ENCODE measurements at regions of chr16 and their contacts with region 1.

Region 1: GRCh38 chr16:17578921-17579874 is 108.4 kb upstream of the XYLT1 start:
- H3K4me3 Mint-ChIP-seq: no peak overlapping the region
- H3K27ac Mint-ChIP-seq: no peak overlapping the region
- H3K4me1 Mint-ChIP-seq: no peaks in the 10 kb centered on the region
- H3K27me3 Mint-ChIP-seq: no peaks in the 10 kb centered on the region

Region 2: DNA sequence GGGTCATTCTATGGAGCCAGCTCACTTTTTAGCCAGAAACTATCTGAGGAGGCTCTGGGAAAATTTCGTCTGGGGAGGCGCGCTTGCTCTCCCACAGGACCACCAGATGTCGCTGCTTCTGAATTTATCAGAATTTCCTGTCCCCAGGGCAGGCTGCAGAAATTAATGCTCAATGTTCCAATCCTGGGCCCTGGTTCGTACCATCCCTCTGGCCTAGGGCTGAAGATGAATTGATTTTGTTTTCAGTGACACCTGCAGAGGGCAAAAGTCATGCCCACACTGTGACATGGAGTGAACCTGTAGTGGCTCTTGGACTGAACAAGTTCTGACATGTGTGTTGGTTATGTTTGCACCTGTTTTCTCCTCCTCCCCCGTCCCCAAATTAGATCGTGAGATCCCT is 717.7 kb before region 1 on chr16:
- intact Hi-C with region 1: loop called (anchors 5 kb)
- H3K4me3 Mint-ChIP-seq: no peak overlapping the region
- H3K27ac Mint-ChIP-seq: no peak overlapping the region
- H3K4me1 Mint-ChIP-seq: no peaks in the 10 kb centered on the region
- H3K27me3 Mint-ChIP-seq: peaks cover 9% of the 10 kb centered on the region

Region 3: GRCh38 chr16:17556276-17557052 is 22.7 kb before region 1 on chr16:
- intact Hi-C with region 1: no loop called
- H3K4me3 Mint-ChIP-seq: no peak overlapping the region
- H3K27ac Mint-ChIP-seq: no peak overlapping the region
- H3K4me1 Mint-ChIP-seq: no peaks in the 10 kb centered on the region
- H3K27me3 Mint-ChIP-seq: peaks cover 3% of the 10 kb centered on the region